Aorta (tissue), 5 donors: ENCODE measurements at regions of chr17 and their contacts with region 1.

Region 1: GRCh38 chr17:2644971-2645370 is 51.5 kb downstream of the PAFAH1B1 start:
- DNase-seq: no peak
- ATAC-seq: no peak
- H3K4me3 ChIP-seq: no peak overlapping the region
- H3K27ac ChIP-seq: no peak overlapping the region
- H3K4me1 ChIP-seq: peaks cover 0 to 4% of the 10 kb centered on the region in 2 donors
- H3K27me3 ChIP-seq: no peaks in the 10 kb centered on the region

Region 2: DNA sequence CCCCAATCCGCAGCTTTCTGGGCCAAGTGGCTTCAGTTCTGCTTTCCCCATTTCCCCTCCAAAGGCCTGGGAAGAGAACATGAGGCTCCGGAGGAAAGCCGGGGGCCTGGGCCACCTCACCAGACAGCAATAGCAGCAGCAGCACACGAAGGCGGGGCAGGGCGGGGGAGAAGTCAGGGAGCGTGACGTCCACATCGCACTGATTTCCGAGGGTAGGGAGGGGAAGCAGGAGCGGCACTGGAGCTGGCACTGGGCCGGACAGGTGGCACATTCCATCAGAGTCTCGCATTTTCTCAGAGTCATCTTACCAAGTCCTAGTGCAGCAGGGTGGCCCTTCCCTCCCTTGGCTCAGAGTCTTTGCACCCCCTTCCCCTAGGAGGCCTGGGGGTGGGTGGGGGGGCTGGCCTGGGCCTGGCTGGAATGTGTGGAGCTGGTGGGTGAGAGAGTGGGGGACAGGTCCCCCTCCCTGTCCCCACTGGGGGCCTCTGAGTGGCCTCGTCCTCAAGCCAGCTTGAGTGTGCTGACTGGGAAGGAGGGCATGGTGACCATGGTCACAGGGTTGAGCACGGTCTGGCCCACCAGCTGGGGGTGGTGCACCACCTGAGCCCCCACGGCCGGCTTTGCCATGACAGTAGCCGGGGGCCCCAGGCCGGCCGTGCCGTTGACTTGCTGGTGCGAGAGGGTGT is 258.4 kb before region 1 on chr17:
- intact Hi-C with region 1: no loop called
- DNase-seq: no peak
- ATAC-seq: no peak
- H3K4me3 ChIP-seq: no peak overlapping the region
- H3K27ac ChIP-seq: no peak overlapping the region
- H3K4me1 ChIP-seq: no peaks in the 10 kb centered on the region
- H3K27me3 ChIP-seq: no peaks in the 10 kb centered on the region

Region 3: DNA sequence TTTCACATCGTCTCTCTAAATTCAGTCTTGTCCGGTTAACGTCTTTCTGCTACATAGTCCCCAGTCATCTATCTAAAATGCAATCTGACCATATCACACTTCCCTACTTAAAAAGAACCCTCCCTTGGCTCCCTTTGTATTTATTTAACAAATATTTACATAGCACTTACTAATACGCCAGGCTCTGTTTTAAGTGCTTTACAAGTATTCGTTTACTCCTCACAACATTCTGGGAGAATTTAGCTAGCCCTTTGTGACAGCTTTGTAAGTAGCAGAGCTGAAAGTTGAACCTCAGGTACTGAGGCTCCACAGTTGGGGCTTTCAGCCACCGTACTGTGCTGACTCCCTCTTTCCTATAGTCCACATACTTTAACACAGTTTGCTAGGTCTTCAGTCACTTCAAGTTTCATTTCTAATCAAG is 42.4 kb before region 1 on chr17:
- intact Hi-C with region 1: loop called (anchors 5 to 10 kb)
- DNase-seq: no peak
- ATAC-seq: no peak
- H3K4me3 ChIP-seq: no peak overlapping the region
- H3K27ac ChIP-seq: no peak overlapping the region
- H3K4me1 ChIP-seq: peaks cover 4 to 17% of the 10 kb centered on the region in 2 donors
- H3K27me3 ChIP-seq: no peaks in the 10 kb centered on the region